Head of caudate nucleus (tissue), 42 donors: ENCODE measurements at regions of chr3 and their contacts with region 1.

Region 1: DNA sequence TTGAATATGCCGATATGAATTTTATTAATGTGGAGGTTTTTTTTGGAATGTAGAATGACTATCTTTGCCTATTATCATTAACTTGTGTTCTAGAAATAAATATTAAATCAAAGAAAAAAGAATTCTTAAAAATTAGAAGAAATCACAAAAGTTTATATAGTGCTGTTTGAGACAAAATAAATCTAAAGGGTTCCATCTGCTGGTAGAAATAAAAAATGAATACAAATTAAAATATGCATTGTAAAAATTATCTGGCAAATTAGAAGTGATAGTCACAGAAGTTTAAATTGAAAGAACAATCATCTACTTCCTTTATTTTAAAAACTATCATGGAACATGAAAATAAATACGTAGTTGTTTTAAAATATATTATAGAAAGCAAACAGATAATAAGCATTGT is 22.7 kb upstream of the ZBTB20 start:
- DNase-seq: no peak

Region 2: GRCh38 chr3:114370537-114371174 is 799.2 kb before region 1 on chr3:
- intact Hi-C with region 1: loop called (anchors 10 kb)
- DNase-seq: no peak

Region 3: GRCh38 chr3:115239717-115240116 is 69.9 kb after region 1 on chr3:
- intact Hi-C with region 1: no loop called
- DNase-seq: peak; percentile 45 to 95 (median 76)